ENCODE measurements at regions of chr17 and their contacts with region 1.

Region 1: GRCh38 chr17:82212331-82213250 is at the start of gene CCDC57:
- DNase-seq: peak; percentile 61
- ATAC-seq: peak; percentile 65
- H3K4me3 ChIP-seq: peak within 1 kb of the TSS; percentile 87 to 98 (median 92)
- H3K27ac ChIP-seq: peak within 1 kb of the TSS; percentile 63
- H3K4me1 ChIP-seq: peaks cover 54% of the 10 kb centered on the region
- H3K27me3 ChIP-seq: no peaks in the 10 kb centered on the region
- CTCF ChIP-seq: no peak
- EP300 ChIP-seq: peak; percentile 20 to 23; a peak in 2 of 4 replicates
- POLR2A ChIP-seq: peak in 1 of 2 experiments; percentile 53; a peak in 1 of 4 replicates
- RAD21 ChIP-seq: 0 out of 2 replicates have a peak, but pooled peaks have one; percentile 58
- total RNA-seq, gene CCDC57: 54.8 and 59.9 TPM in 2 replicates

Region 2: GRCh38 chr17:82170412-82170961 is 42.1 kb before region 1 on chr17:
- CTCF ChIA-PET with region 1: no interaction called
- POLR2A ChIA-PET with region 1: no interaction called
- in situ Hi-C with region 1: no loop called
- intact Hi-C with region 1: no loop called
- DNase-seq: no peak
- ATAC-seq: no peak
- H3K4me3 ChIP-seq: no peak overlapping the region
- H3K27ac ChIP-seq: no peak overlapping the region
- H3K4me1 ChIP-seq: peaks cover 2% of the 10 kb centered on the region
- H3K27me3 ChIP-seq: no peaks in the 10 kb centered on the region
- CTCF ChIP-seq: no peak
- EP300 ChIP-seq: no peak
- POLR2A ChIP-seq: no peak
- RAD21 ChIP-seq: no peak

Region 3: GRCh38 chr17:82225368-82226029 is 12.9 kb after region 1 on chr17:
- CTCF ChIA-PET with region 1: no interaction called
- POLR2A ChIA-PET with region 1: interaction called, 117 read pairs
- in situ Hi-C with region 1: no loop called
- intact Hi-C with region 1: loop called (anchors 1 kb)
- DNase-seq: no peak
- ATAC-seq: peak; percentile 26
- H3K4me3 ChIP-seq: peak overlapping the region; percentile 56 to 77 (median 60)
- H3K27ac ChIP-seq: peak overlapping the region; percentile 19
- H3K4me1 ChIP-seq: peaks cover 61% of the 10 kb centered on the region
- H3K27me3 ChIP-seq: no peaks in the 10 kb centered on the region
- CTCF ChIP-seq: peak; percentile 6; the same call in 1 of the 2 replicates
- EP300 ChIP-seq: no peak
- POLR2A ChIP-seq: peak in 1 of 2 experiments; percentile 32; a peak in 1 of 4 replicates
- RAD21 ChIP-seq: no peak

Region 4: DNA sequence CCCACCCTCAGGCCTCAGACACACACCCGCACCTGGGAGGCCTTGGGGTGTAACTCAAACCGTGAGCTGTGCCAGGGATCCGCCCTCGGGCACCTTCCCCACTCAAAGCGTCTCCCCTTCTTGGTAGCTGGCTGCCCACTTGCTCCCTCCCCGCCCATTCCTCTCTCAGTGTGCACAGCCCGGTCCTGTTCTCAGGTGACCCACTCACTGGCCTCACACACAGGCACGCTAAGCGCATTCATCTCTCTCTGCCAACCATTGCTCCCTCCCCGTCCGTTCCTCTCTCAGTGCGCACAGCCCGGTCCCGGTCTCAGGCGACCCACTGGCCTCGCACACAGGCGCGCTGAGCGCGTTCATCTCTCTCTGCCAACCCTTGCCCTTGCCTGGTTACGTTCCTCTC is 414.8 kb after region 1 on chr17:
- CTCF ChIA-PET with region 1: no interaction called
- POLR2A ChIA-PET with region 1: no interaction called
- in situ Hi-C with region 1: no loop called
- intact Hi-C with region 1: no loop called
- DNase-seq: no peak
- ATAC-seq: no peak; the same call in 1 of the 3 replicates
- H3K4me3 ChIP-seq: no peak overlapping the region
- H3K27ac ChIP-seq: no peak overlapping the region
- H3K4me1 ChIP-seq: peaks cover 4% of the 10 kb centered on the region
- H3K27me3 ChIP-seq: no peaks in the 10 kb centered on the region
- CTCF ChIP-seq: no peak
- EP300 ChIP-seq: no peak
- POLR2A ChIP-seq: no peak
- RAD21 ChIP-seq: no peak